Common myeloid progenitor, CD34-positive (primary cell): ENCODE measurements at regions of chr15 and their contacts with region 1.

Region 1: DNA sequence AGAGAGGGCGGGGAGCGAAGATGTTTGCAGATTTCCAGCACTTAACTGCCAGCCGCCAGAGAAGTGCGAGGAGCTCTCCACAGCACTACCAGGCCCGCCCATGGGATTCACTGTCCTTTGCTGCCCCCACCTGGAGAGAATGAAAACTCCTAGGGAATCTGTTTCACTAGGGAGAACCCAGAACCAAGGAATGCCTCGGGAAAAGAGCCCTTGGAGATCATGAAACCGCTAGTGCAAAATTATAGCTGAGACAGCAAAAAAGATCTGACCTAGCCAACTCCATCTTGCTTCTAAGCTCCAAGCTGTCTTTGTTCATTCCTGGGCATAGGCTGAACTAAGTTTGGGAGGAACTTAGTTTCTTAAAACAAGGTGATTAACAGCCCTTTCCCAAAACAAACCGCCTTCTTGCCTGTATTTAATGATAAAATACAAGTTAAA is 82.6 kb upstream of the GCNT3 start:
- DNase-seq: peak; percentile 66 to 72 (median 66)
- H3K4me3 ChIP-seq: no peak overlapping the region
- H3K27ac ChIP-seq: no peak overlapping the region
- H3K4me1 ChIP-seq: peaks cover 8 to 16% (median 13%) of the 10 kb centered on the region in 4 experiments
- H3K27me3 ChIP-seq: peaks cover 0 to 2% (median 0%) of the 10 kb centered on the region in 5 experiments

Region 2: GRCh38 chr15:59247364-59247763 is 281.6 kb before region 1 on chr15:
- CTCF ChIA-PET with region 1: interaction called, 11 read pairs
- POLR2A ChIA-PET with region 1: no interaction called
- DNase-seq: peak; percentile 77 to 88 (median 84)
- H3K4me3 ChIP-seq: no peak overlapping the region
- H3K27ac ChIP-seq: no peak overlapping the region
- H3K4me1 ChIP-seq: peaks cover 0 to 4% (median 0%) of the 10 kb centered on the region in 4 experiments
- H3K27me3 ChIP-seq: no peaks in the 10 kb centered on the region

Region 3: GRCh38 chr15:59399465-59400102 is 129.4 kb before region 1 on chr15:
- CTCF ChIA-PET with region 1: no interaction called
- POLR2A ChIA-PET with region 1: no interaction called
- DNase-seq: peak in 2 of 3 donors; percentile 39 to 54
- H3K4me3 ChIP-seq: no peak overlapping the region
- H3K27ac ChIP-seq: no peak overlapping the region
- H3K4me1 ChIP-seq: peaks cover 0 to 19% (median 1%) of the 10 kb centered on the region in 4 experiments
- H3K27me3 ChIP-seq: no peaks in the 10 kb centered on the region

Region 4: GRCh38 chr15:59516655-59517461 is 12.1 kb before region 1 on chr15:
- CTCF ChIA-PET with region 1: interaction called, 20 read pairs
- POLR2A ChIA-PET with region 1: no interaction called
- DNase-seq: peak in 1 of 3 donors; percentile 14
- H3K4me3 ChIP-seq: no peak overlapping the region
- H3K27ac ChIP-seq: no peak overlapping the region
- H3K4me1 ChIP-seq: peaks cover 0 to 2% (median under 1%) of the 10 kb centered on the region in 4 experiments
- H3K27me3 ChIP-seq: peaks cover 0 to 2% (median 0%) of the 10 kb centered on the region in 5 experiments

Region 5: DNA sequence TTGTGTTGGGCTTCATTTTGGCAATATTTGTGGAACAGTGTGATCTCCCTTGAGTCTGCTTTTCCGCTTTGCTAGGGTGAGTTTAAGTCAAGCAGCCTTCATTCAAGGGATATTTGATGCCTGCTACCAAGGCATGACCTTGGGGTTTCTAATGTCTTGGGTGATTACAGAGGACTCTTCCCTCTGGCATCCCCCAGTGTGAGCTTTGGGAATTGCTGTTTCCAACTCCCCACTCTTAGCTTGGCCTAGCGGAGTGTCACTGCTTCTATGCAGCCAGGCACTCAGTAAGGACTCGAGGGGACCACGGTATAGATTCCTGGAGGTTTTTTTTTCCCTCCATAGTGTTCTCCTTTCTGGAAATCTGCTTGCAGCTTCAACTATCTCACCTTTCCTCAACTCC is 103.7 kb after region 1 on chr15:
- CTCF ChIA-PET with region 1: interaction called, 15 read pairs
- POLR2A ChIA-PET with region 1: no interaction called
- DNase-seq: no peak
- H3K4me3 ChIP-seq: no peak overlapping the region
- H3K27ac ChIP-seq: no peak overlapping the region
- H3K4me1 ChIP-seq: no peaks in the 10 kb centered on the region
- H3K27me3 ChIP-seq: no peaks in the 10 kb centered on the region

Region 6: GRCh38 chr15:59654046-59654445 is 125.1 kb after region 1 on chr15:
- CTCF ChIA-PET with region 1: interaction called, 10 read pairs
- POLR2A ChIA-PET with region 1: no interaction called
- DNase-seq: no peak
- H3K4me3 ChIP-seq: no peak overlapping the region
- H3K27ac ChIP-seq: no peak overlapping the region
- H3K4me1 ChIP-seq: peaks cover 5 to 32% (median 17%) of the 10 kb centered on the region in 4 experiments
- H3K27me3 ChIP-seq: no peaks in the 10 kb centered on the region

Region 7: GRCh38 chr15:60737217-60737616 is 1208.2 kb after region 1 on chr15:
- CTCF ChIA-PET with region 1: no interaction called
- POLR2A ChIA-PET with region 1: no interaction called
- DNase-seq: no peak
- H3K4me3 ChIP-seq: no peak overlapping the region
- H3K27ac ChIP-seq: no peak overlapping the region
- H3K4me1 ChIP-seq: no peaks in the 10 kb centered on the region
- H3K27me3 ChIP-seq: no peaks in the 10 kb centered on the region